Natural killer cell (primary cell): ENCODE measurements at regions of chr19 and their contacts with region 1.

Region 1: DNA sequence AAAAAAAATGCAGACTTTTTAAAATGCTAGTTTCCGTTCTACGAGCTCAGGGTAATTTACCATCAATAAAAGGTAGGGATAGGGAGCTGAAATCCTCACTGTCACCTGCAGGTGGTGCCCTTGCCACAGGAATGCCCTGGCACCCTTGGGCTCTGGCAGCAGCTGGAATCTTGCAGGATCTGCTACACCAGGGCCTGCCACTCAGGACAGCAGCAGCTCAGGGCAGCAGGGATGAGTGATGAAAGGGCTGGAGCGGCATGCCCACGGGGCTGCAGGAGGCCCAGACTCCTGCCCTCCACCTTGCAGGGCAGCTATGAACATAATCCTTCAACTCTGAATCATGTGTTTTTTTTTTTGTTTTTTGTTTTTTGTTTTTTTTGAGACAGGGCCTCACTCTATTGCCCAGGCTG is 54.0 kb downstream of the GNG7 start:
- DNase-seq: peak; percentile 66 to 86
- ATAC-seq: peak; percentile 77 to 89 (median 86)
- H3K4me3 ChIP-seq: no peak overlapping the region
- H3K4me3 Mint-ChIP-seq: no peak overlapping the region
- H3K27ac ChIP-seq: no peak overlapping the region
- H3K27ac Mint-ChIP-seq: no peak overlapping the region
- H3K4me1 ChIP-seq: no peaks in the 10 kb centered on the region
- H3K4me1 Mint-ChIP-seq: no peaks in the 10 kb centered on the region
- H3K27me3 ChIP-seq: no peaks in the 10 kb centered on the region
- H3K27me3 Mint-ChIP-seq: peaks cover 0 to 2% of the 10 kb centered on the region in 2 donors
- CTCF ChIP-seq: peak; percentile 86

Region 2: GRCh38 chr19:2750808-2751443 is 102.4 kb after region 1 on chr19:
- intact Hi-C with region 1: loop called (anchors 1 kb)
- DNase-seq: no peak
- ATAC-seq: no peak
- H3K4me3 ChIP-seq: no peak overlapping the region
- H3K4me3 Mint-ChIP-seq: no peak overlapping the region
- H3K27ac ChIP-seq: no peak overlapping the region
- H3K27ac Mint-ChIP-seq: no peak overlapping the region
- H3K4me1 ChIP-seq: peaks cover 7% of the 10 kb centered on the region
- H3K4me1 Mint-ChIP-seq: no peaks in the 10 kb centered on the region
- H3K27me3 ChIP-seq: no peaks in the 10 kb centered on the region
- H3K27me3 Mint-ChIP-seq: peaks cover 0 to 2% of the 10 kb centered on the region in 2 donors
- CTCF ChIP-seq: no peak

Region 3: GRCh38 chr19:2867025-2867991 is 218.8 kb after region 1 on chr19 and contains the start of gene ZNF556:
- intact Hi-C with region 1: loop called (anchors 1 kb)
- DNase-seq: no peak
- ATAC-seq: peak in 1 of 3 donors; percentile 29
- H3K4me3 ChIP-seq: no peak within 1 kb of the TSS
- H3K4me3 Mint-ChIP-seq: no peak within 1 kb of the TSS
- H3K27ac ChIP-seq: no peak within 1 kb of the TSS
- H3K27ac Mint-ChIP-seq: no peak within 1 kb of the TSS
- H3K4me1 ChIP-seq: peaks cover 3% of the 10 kb centered on the region
- H3K4me1 Mint-ChIP-seq: peaks cover 4 to 9% of the 10 kb centered on the region in 2 donors
- H3K27me3 ChIP-seq: no peaks in the 10 kb centered on the region
- H3K27me3 Mint-ChIP-seq: peaks cover 3 to 7% of the 10 kb centered on the region in 2 donors
- CTCF ChIP-seq: no peak
- total RNA-seq, gene ZNF556: not detected